ENCODE measurements at regions of chr9 and their contacts with region 1.

Region 1: DNA sequence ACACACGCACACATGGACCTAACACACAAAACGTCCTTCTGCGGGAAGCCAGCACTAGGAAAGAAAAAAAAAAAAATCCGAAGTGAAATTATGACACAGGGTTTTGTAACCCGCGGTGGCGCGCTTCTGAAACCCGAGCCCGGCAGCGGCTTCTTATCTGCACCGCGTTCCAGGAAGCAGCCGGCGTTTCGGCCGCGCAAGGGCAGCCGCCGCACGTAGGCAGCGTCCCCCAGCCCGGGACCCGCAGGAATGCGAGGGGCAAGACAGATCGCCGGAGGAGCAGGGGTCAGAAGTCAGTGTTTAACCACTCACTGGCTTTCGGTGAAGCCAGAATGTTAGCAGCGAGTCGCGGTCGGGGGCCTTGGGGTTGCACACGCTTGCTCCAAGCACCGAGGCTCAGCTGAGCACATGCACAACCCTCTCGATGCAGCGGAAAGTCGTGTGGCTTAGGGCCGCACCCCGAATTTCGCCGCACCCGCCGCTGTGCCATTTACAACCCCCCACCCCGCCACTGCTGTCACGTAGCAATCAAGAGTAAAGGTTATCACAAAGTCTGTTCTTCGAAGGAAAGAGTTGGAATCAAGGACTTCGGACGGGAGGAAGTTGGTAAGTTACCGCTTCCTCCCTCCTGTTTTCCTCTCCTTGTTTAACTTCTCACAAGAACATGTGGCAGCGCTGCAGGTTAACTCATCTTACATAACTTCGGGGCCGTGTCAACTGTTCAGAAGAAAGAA is 167.9 kb downstream of the AUH start:
- DNase-seq: peak; percentile 95
- H3K4me3 Mint-ChIP-seq: peak overlapping the region; percentile 85
- H3K27ac Mint-ChIP-seq: peak overlapping the region; percentile 99
- H3K4me1 Mint-ChIP-seq: peaks cover 71% of the 10 kb centered on the region
- H3K27me3 Mint-ChIP-seq: no peaks in the 10 kb centered on the region

Region 2: DNA sequence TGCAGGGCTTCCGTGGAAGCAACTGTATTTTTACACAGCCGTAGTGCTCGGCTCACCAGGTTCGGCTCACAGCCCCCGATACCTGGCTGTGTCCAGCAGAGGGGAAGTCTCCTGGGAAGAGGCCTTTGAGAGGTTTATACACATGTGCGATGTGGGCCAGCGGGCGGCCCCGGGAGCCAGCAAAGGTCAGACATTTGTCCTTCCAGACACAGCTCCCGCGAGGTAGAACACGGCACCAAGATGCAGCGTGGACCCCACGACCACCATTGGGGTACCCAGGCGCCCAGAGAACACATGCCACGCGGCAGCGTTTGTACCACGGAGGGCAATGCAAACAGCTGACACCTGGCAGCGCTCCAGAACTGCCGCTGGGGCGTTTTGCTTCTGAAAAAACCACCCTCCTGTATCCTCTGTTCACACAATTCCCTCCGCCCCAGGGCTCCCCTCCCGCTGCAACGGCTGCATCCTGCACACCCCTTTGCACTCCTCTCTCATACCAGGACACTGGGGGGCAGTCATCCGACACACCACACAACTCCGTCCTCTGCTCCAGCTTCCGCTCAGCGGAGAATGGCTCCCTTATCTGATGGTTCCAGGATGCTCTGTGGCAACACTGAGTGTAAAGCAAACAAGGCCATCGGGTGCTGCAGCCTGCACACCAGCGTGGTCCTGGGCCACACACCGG is 156.9 kb before region 1 on chr9:
- intact Hi-C with region 1: loop called (anchors 2 kb)
- DNase-seq: peak; percentile 93
- H3K4me3 Mint-ChIP-seq: peak overlapping the region; percentile 53
- H3K27ac Mint-ChIP-seq: peak overlapping the region; percentile 90
- H3K4me1 Mint-ChIP-seq: peaks cover 58% of the 10 kb centered on the region
- H3K27me3 Mint-ChIP-seq: peaks cover under 1% of the 10 kb centered on the region

Region 3: DNA sequence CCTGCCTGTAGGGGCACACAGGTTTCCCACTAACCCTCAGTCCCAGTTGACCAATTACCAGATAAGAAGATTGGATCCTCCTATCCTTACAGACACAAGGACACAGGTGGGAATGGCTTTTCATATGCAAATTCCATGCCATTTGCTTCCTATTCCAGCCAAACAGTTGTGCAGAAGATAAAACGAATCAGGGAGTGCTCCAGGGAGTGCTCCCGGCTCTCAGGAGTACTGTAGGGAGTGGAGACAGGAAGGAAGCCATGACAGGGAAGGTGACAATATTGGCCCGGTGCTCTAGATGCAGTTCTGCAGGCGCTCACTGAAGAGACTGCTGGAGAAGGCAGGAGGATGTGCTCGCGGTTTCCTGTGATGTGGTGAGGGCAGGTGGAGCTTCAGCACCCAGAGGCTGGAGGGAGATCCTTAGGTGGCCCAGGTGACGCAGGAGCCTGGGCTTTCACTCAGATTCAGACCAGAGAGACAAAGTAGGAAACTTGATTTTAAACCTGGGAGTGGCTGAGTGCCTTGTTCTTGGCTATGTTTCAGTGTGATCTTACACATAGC is 92.1 kb before region 1 on chr9:
- intact Hi-C with region 1: loop called (anchors 1 kb)
- DNase-seq: peak; percentile 97
- H3K4me3 Mint-ChIP-seq: peak overlapping the region; percentile 70
- H3K27ac Mint-ChIP-seq: peak overlapping the region; percentile 89
- H3K4me1 Mint-ChIP-seq: peaks cover 67% of the 10 kb centered on the region
- H3K27me3 Mint-ChIP-seq: no peaks in the 10 kb centered on the region

Region 4: GRCh38 chr9:91164724-91165520 is 28.9 kb before region 1 on chr9:
- intact Hi-C with region 1: loop called (anchors 1 kb)
- DNase-seq: peak; percentile 94
- H3K4me3 Mint-ChIP-seq: peak overlapping the region; percentile 81
- H3K27ac Mint-ChIP-seq: peak overlapping the region; percentile 98
- H3K4me1 Mint-ChIP-seq: peaks cover 55% of the 10 kb centered on the region
- H3K27me3 Mint-ChIP-seq: no peaks in the 10 kb centered on the region

Region 5: DNA sequence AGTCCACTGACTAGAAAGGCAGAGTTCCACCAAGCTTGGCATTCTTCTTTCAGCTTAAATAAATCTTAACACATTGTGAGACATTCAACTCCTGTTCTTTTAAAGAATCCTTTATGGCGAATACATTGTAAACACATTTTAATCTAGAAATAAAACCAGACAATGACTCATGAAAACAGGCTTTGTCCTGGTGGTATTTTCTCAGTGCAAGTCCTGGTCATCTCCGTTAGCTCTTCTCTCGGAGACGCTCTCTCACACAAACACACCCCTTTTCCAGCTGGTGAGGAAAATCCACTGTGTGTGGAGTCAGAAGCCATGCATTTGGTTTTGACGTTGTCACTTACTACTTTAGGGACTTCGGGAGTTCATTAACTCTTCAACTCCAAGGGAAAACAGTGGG is 27.5 kb after region 1 on chr9:
- intact Hi-C with region 1: no loop called
- DNase-seq: no peak
- H3K4me3 Mint-ChIP-seq: no peak overlapping the region
- H3K27ac Mint-ChIP-seq: no peak overlapping the region
- H3K4me1 Mint-ChIP-seq: peaks cover 15% of the 10 kb centered on the region
- H3K27me3 Mint-ChIP-seq: no peaks in the 10 kb centered on the region

Region 6: GRCh38 chr9:91346652-91347051 is 152.8 kb after region 1 on chr9:
- intact Hi-C with region 1: loop called (anchors 1 kb)
- DNase-seq: peak; percentile 69
- H3K4me3 Mint-ChIP-seq: no peak overlapping the region
- H3K27ac Mint-ChIP-seq: peak overlapping the region; percentile 49
- H3K4me1 Mint-ChIP-seq: peaks cover 40% of the 10 kb centered on the region
- H3K27me3 Mint-ChIP-seq: no peaks in the 10 kb centered on the region

Region 7: DNA sequence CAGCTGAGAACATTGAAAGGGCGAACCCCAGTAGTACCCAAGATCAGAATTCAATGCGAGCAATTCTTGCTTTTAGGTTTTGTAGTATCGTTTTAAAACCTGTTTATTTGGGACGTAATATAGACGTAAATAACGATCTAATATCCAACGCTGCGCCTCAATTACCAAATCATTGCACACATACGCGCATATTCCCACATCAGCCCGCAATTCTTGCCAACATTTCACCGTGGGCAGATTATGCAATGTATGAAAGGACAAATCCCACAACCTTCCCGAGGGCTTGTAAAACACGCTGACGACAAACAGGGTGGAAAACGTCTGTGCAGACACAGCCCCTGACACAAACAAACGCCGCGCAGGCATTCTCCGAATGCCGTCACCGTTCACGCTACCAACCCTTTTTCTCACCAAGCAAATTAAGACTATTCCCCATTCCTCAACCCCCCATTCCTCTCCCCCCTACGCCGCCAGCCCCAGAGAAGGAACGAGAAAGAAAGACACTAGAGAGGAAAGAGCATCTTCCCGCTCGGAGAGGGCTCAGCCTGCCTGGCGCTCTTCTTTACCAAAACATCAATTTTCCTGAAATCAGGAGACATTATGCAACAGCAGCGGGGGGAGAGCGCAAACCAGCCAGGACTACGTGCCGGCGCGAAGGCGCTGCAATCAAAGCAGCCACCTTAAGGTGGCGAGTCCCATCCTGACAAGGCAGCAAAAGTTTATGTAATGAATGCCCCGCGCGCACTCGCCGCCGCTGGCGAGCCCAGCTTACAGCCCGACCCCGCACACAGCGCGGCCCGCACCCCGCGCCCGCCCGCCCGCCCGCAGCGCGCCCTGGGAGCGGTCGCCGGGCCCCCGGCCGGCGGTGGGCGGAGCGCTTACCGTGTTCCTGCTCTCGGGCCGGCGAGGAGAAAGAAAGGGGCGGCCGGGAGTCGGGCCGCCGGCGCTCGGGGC is 229.2 kb after region 1 on chr9:
- intact Hi-C with region 1: loop called (anchors 1 kb)
- DNase-seq: peak; percentile 89
- H3K4me3 Mint-ChIP-seq: peak overlapping the region; percentile 100
- H3K27ac Mint-ChIP-seq: peak overlapping the region; percentile 98
- H3K4me1 Mint-ChIP-seq: peaks cover 57% of the 10 kb centered on the region
- H3K27me3 Mint-ChIP-seq: no peaks in the 10 kb centered on the region